ENCODE measurements at regions of chr19 and their contacts with region 1.

Region 1: DNA sequence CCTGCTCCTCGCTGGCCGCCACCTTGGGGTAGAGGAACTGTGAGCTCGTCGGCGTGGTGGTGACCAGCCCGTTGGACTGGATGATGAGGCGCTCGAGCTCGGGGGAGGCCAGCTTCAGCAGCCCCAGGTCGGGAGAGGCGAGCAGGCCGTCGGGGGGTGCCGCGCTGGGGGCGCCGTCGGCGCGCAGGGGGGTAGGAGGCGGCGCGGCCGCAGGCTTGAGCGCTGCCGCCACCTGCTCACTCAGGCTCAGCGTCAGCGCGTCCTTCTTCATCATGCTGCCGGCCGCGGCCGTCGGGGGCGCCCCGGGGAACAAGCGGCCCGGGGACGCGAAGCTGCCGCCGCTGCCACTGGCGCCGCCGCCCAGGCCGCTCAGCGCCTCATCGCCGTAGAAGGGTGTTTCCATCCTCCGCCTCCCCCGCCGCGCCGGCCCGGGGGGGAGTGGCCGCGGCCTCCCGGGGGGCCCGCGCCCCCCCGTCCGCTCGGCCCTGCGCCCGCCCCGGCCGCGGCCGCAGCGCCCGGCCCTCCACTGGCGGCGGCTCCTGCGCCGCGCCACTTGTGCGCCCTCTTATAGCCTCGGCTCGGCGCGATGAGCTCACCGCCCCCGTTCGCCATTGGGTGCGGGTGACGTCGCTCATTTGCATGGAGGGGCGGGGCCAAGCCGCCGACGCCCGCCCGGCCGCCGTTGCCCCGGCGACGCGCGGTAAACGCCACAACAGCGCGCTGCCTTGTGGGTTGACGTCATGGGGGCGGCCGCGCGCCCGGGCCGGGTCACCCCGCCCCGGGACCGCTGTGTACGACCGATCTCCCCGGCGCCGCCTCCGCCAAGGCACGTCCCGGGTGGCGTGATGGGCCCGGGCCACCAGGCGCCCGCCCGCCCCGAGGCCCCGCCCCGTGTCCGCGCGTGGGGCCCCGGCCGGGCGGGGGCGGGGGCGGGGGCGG is at the start of gene JUND:
- DNase-seq: peak; percentile 98

Region 2: GRCh38 chr19:18203863-18204393 is 77.4 kb before region 1 on chr19 and contains the start of gene RAB3A:
- CTCF ChIA-PET with region 1: interaction called, 4 read pairs
- POLR2A ChIA-PET with region 1: interaction called, 17 read pairs
- DNase-seq: peak; percentile 97

Region 3: GRCh38 chr19:18291590-18292461 is 10.5 kb after region 1 on chr19:
- CTCF ChIA-PET with region 1: interaction called, 20 read pairs
- POLR2A ChIA-PET with region 1: interaction called, 120 read pairs
- DNase-seq: peak; percentile 70

Region 4: GRCh38 chr19:18322759-18323460 is 41.6 kb after region 1 on chr19 and contains the start of gene LSM4:
- CTCF ChIA-PET with region 1: interaction called, 77 read pairs
- POLR2A ChIA-PET with region 1: interaction called, 491 read pairs
- DNase-seq: peak; percentile 98

Region 5: DNA sequence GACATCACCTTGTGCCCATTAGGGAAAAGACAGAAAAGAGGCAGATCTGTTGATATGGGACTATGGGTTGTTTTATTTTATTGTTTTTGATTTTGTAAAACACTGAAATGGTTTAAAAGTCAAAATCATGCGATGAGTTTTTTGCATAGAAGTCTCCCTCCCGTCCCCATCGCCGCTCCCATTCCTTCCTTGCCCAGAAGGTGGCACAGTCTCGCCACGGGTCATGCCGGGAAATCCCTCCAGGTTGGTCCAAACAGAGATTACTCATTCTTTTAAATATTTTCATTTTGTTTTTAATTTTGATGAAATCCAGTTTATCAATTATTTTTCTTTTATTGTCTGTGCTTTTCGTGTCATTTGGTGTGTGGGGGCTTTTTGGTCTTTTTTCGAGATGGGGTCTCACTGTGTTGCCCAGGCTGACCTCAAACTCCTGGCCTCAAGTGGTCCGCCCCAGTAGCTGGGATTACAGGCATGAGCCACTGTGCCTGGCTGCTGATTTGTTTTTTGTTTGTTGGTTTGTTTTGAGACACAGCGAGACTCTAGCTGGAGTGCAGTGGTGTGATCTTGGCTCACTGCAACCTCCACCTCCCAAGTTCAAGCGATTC is 68.3 kb after region 1 on chr19:
- CTCF ChIA-PET with region 1: interaction called, 22 read pairs
- POLR2A ChIA-PET with region 1: interaction called, 10 read pairs
- DNase-seq: peak; percentile 69

Region 6: GRCh38 chr19:18419195-18419698 is 137.9 kb after region 1 on chr19 and contains the start of gene SSBP4:
- CTCF ChIA-PET with region 1: interaction called, 9 read pairs
- POLR2A ChIA-PET with region 1: interaction called, 56 read pairs
- DNase-seq: peak; percentile 87

Region 7: GRCh38 chr19:18496167-18496979 is 215.0 kb after region 1 on chr19:
- CTCF ChIA-PET with region 1: no interaction called
- POLR2A ChIA-PET with region 1: no interaction called
- DNase-seq: no peak

Measured in HEK293T (cell line).